ENCODE measurements at regions of chr11 and their contacts with region 1.

Region 1: GRCh38 chr11:85810871-85811611 is at the start of gene SYTL2:
- DNase-seq: peak; percentile 58 to 75
- ATAC-seq: peak; percentile 89 to 97
- H3K4me3 ChIP-seq: peak within 1 kb of the TSS; percentile 52
- H3K27ac ChIP-seq: peak within 1 kb of the TSS; percentile 55 to 81
- H3K4me1 ChIP-seq: peaks cover 42% of the 10 kb centered on the region
- CTCF ChIP-seq: no peak; the same call in 1 of the 3 replicates
- EP300 ChIP-seq: no peak
- POLR2A ChIP-seq: peak; percentile 86
- RAD21 ChIP-seq: peak; percentile 4 to 42; a peak in 2 of 5 replicates
- polyA plus RNA-seq, gene SYTL2: 34.2 and 41.6 TPM in 2 replicates

Region 2: DNA sequence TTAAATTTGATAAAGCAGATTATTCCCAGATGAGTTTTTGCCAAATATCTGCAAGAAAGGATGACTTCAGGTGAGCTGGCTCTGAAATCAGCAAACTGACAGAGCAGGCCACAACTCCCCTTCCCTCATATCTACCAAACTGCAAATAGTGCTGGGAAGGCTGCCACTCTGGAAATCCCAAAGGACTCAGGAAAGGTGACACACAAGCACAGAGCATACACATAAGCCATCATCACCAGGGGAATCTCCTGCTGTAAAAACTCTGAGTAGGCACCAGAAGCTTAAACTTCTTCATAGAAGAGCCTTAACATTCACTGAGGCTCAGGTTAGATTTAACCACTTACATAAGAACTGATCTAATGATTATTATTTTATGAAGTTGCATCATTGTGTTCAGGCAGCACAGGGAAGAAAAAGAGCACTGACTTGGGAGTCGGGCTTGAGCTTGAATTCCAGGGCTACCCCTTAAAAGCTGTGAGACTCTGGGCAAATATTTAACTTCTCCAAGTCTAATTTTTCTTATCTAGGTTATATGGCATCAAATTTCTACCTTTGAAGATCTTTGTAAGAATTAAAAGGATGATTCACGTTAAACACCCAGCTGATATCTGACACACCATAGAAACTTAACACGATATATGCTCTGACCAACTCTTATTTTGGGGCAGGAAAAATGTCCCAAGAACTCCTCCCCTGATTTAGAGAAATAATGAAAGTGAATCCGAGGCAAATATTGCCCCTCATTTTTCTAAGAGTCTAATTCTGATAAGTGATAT is 15.1 kb before region 1 on chr11:
- CTCF ChIA-PET with region 1: interaction called, 13 read pairs
- POLR2A ChIA-PET with region 1: no interaction called
- DNase-seq: no peak
- ATAC-seq: peak; percentile 48 to 67; a peak in 3 of 6 replicates
- H3K4me3 ChIP-seq: no peak overlapping the region
- H3K27ac ChIP-seq: peak overlapping the region; percentile 50 to 78
- H3K4me1 ChIP-seq: peaks cover 50% of the 10 kb centered on the region
- CTCF ChIP-seq: no peak
- EP300 ChIP-seq: no peak
- POLR2A ChIP-seq: no peak
- RAD21 ChIP-seq: no peak

Region 3: DNA sequence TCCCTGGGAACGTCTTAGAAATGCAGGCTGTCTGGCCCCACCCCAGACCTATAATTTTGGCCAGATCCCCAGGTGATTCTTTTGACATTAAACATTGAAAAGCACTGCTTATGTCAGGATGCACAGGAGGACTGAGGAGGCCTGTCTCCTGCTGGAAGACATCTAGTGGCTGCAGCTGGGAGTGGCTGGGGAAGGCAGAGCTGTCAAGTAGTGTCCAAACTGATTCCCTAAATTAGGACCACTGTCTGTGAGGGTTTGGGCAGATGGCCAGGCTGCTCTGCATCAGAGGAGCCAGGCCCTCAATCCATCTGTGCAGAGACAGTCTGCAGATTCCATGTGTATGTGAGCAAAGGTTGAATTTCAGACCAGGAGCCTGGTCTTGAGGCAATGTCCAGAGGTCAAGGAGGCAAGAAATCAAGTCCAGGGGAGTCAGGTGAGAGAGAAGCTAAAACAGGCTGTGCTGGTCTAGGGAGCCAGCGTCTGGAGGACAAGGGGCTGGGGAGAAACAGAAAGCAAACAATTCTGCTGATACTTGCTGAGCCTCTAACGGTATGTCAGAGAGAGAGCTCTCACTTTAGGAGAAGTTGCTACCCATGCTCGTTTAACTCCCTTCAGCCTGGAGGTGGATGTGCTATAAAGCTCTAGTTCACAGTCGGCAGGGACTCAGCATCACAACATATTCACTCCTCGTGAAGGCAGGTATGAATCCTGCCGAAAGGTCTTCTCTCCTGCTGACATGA is 15.2 kb after region 1 on chr11:
- CTCF ChIA-PET with region 1: interaction called, 35 read pairs
- POLR2A ChIA-PET with region 1: no interaction called
- DNase-seq: peak; percentile 58 to 84
- ATAC-seq: peak; percentile 78 to 81
- H3K4me3 ChIP-seq: no peak overlapping the region
- H3K27ac ChIP-seq: peak overlapping the region; percentile 71 to 80; a peak in 4 of 6 replicates
- H3K4me1 ChIP-seq: peaks cover 62% of the 10 kb centered on the region
- CTCF ChIP-seq: peak; percentile 60
- EP300 ChIP-seq: no peak
- POLR2A ChIP-seq: no peak
- RAD21 ChIP-seq: peak; percentile 59 to 74

Measured in A549 (cell line).